HEK293 (cell line): ENCODE measurements at regions of chr6 and their contacts with region 1.

Region 1: DNA sequence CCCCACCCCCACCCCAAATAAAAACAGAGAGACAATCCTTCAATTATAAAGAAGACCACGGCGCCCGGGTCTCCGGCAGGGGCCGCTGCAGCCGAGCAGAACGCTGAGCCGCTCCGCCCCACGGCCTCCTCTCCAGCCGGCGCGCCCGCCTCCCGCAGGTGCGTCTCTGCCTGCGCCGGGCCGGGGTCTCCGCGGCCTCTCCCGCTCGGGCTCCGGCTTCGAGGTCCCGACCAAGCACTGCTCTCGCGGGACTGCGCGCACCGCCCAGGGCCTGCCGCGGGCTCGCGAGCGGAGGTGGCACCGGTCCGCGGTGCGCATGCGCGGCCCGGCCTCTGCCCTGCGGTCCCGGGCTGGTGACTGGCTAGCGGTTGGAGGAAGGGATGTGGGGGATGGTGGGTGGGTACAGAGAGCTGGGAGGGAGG is 241 bp upstream of the SIRT5 start:
- H3K4me3 ChIP-seq: peak overlapping the region; percentile 86
- H3K27ac ChIP-seq: peak overlapping the region; percentile 93
- H3K4me1 ChIP-seq: 0 out of 2 replicates have a peak, but pooled peaks cover 3% of the 10 kb centered on the region
- CTCF ChIP-seq: no peak

Region 2: DNA sequence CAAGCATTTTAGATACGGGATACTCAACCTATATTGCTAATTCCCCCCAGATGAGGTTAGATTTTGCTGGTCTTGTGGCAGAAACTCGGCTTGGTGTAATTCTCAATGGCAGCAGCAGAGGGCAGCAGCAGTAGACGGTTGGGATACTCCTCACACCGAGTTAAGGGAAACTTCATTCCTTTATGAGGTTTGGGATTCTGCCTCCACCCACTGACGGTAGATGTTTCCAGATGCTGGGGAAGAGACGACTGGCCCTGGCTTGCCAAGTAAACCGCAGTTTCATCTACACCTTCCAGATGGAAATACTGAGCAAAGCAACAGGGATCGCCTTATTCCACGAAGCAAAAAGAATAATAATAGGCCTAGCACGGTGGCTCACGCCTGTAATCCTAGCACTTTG is 237.6 kb before region 1 on chr6:
- CTCF ChIA-PET with region 1: interaction called, 18 read pairs
- POLR2A ChIA-PET with region 1: interaction called, 6 read pairs
- H3K4me3 ChIP-seq: no peak overlapping the region
- H3K27ac ChIP-seq: no peak overlapping the region
- H3K4me1 ChIP-seq: no peaks in the 10 kb centered on the region
- CTCF ChIP-seq: peak; percentile 76

Region 3: GRCh38 chr6:13395272-13396237 is 178.6 kb before region 1 on chr6:
- CTCF ChIA-PET with region 1: interaction called, 10 read pairs
- POLR2A ChIA-PET with region 1: interaction called, 9 read pairs
- H3K4me3 ChIP-seq: no peak overlapping the region
- H3K27ac ChIP-seq: peak overlapping the region; percentile 88
- H3K4me1 ChIP-seq: peaks cover 30% of the 10 kb centered on the region
- CTCF ChIP-seq: no peak

Region 4: GRCh38 chr6:13487122-13488014 is 86.8 kb before region 1 on chr6 and contains the start of gene GFOD1:
- CTCF ChIA-PET with region 1: interaction called, 12 read pairs
- POLR2A ChIA-PET with region 1: interaction called, 16 read pairs
- H3K4me3 ChIP-seq: peak within 1 kb of the TSS; percentile 65
- H3K27ac ChIP-seq: peak within 1 kb of the TSS; percentile 95
- H3K4me1 ChIP-seq: peaks cover 9% of the 10 kb centered on the region
- CTCF ChIP-seq: no peak; the same call in 1 of the 2 replicates

Region 5: GRCh38 chr6:13559251-13559650 is 14.9 kb before region 1 on chr6:
- CTCF ChIA-PET with region 1: interaction called, 62 read pairs
- POLR2A ChIA-PET with region 1: interaction called, 13 read pairs
- H3K4me3 ChIP-seq: no peak overlapping the region
- H3K27ac ChIP-seq: no peak overlapping the region
- H3K4me1 ChIP-seq: peaks cover 6% of the 10 kb centered on the region
- CTCF ChIP-seq: no peak

Region 6: GRCh38 chr6:13593720-13594119 is 19.6 kb after region 1 on chr6:
- CTCF ChIA-PET with region 1: interaction called, 32 read pairs
- POLR2A ChIA-PET with region 1: interaction called, 5 read pairs
- H3K4me3 ChIP-seq: no peak overlapping the region
- H3K27ac ChIP-seq: no peak overlapping the region
- H3K4me1 ChIP-seq: no peaks in the 10 kb centered on the region
- CTCF ChIP-seq: no peak

Region 7: GRCh38 chr6:13979284-13980171 is 405.4 kb after region 1 on chr6:
- CTCF ChIA-PET with region 1: no interaction called
- POLR2A ChIA-PET with region 1: no interaction called
- H3K4me3 ChIP-seq: no peak overlapping the region
- H3K27ac ChIP-seq: no peak overlapping the region
- H3K4me1 ChIP-seq: no peaks in the 10 kb centered on the region
- CTCF ChIP-seq: no peak